ENCODE measurements at regions of chr2 and their contacts with region 1.

Region 1: GRCh38 chr2:160730296-160730995 is 236.8 kb upstream of the RBMS1 start:
- DNase-seq: peak; percentile 75
- H3K4me3 ChIP-seq: no peak overlapping the region
- H3K4me3 Mint-ChIP-seq: peak overlapping the region; percentile 46
- H3K27ac Mint-ChIP-seq: peak overlapping the region; percentile 71
- H3K4me1 ChIP-seq: peaks cover 32% of the 10 kb centered on the region
- H3K4me1 Mint-ChIP-seq: peaks cover 40% of the 10 kb centered on the region
- H3K27me3 ChIP-seq: no peaks in the 10 kb centered on the region
- H3K27me3 Mint-ChIP-seq: no peaks in the 10 kb centered on the region
- CTCF ChIP-seq: no peak

Region 2: GRCh38 chr2:160472839-160473251 is 257.6 kb before region 1 on chr2:
- CTCF ChIA-PET with region 1: no interaction called
- POLR2A ChIA-PET with region 1: no interaction called
- intact Hi-C with region 1: no loop called
- DNase-seq: no peak
- H3K4me3 ChIP-seq: no peak overlapping the region
- H3K4me3 Mint-ChIP-seq: no peak overlapping the region
- H3K27ac Mint-ChIP-seq: peak overlapping the region; percentile 9
- H3K4me1 ChIP-seq: peaks cover 13% of the 10 kb centered on the region
- H3K4me1 Mint-ChIP-seq: peaks cover 13% of the 10 kb centered on the region
- H3K27me3 ChIP-seq: no peaks in the 10 kb centered on the region
- H3K27me3 Mint-ChIP-seq: no peaks in the 10 kb centered on the region
- CTCF ChIP-seq: no peak

Region 3: DNA sequence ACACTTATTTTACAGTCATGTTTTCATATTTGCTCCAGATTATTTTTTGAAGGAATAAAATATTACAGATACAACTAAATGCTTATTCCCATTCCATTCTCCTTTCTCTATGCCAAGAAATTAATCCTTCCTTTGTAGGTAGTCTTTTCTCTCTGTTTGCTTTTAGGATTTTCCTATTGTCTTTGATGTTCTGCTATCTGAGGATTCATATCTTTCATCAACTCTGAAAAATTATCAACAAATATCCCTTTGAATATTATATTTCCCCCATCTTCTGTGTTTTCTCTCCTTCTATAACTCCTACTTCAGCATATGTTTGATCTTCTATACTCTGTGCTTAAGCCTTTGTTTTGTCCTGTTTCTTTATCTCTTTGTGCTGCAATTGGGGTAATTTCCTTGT is 23.5 kb after region 1 on chr2:
- CTCF ChIA-PET with region 1: interaction called, 3 read pairs
- POLR2A ChIA-PET with region 1: no interaction called
- intact Hi-C with region 1: loop called (anchors 1 kb)
- DNase-seq: no peak
- H3K4me3 ChIP-seq: no peak overlapping the region
- H3K4me3 Mint-ChIP-seq: no peak overlapping the region
- H3K27ac Mint-ChIP-seq: no peak overlapping the region
- H3K4me1 ChIP-seq: peaks cover 23% of the 10 kb centered on the region
- H3K4me1 Mint-ChIP-seq: peaks cover 21% of the 10 kb centered on the region
- H3K27me3 ChIP-seq: no peaks in the 10 kb centered on the region
- H3K27me3 Mint-ChIP-seq: no peaks in the 10 kb centered on the region
- CTCF ChIP-seq: no peak

Region 4: GRCh38 chr2:160932968-160933367 is 202.5 kb after region 1 on chr2:
- CTCF ChIA-PET with region 1: no interaction called
- POLR2A ChIA-PET with region 1: no interaction called
- intact Hi-C with region 1: loop called (anchors 2 kb)
- DNase-seq: peak in 1 of 2 experiments; percentile 42
- H3K4me3 ChIP-seq: no peak overlapping the region
- H3K4me3 Mint-ChIP-seq: no peak overlapping the region
- H3K27ac Mint-ChIP-seq: no peak overlapping the region
- H3K4me1 ChIP-seq: 0 out of 2 replicates have a peak, but pooled peaks cover 9% of the 10 kb centered on the region
- H3K4me1 Mint-ChIP-seq: peaks cover 7% of the 10 kb centered on the region
- H3K27me3 ChIP-seq: no peaks in the 10 kb centered on the region
- H3K27me3 Mint-ChIP-seq: no peaks in the 10 kb centered on the region
- CTCF ChIP-seq: no peak

Region 5: DNA sequence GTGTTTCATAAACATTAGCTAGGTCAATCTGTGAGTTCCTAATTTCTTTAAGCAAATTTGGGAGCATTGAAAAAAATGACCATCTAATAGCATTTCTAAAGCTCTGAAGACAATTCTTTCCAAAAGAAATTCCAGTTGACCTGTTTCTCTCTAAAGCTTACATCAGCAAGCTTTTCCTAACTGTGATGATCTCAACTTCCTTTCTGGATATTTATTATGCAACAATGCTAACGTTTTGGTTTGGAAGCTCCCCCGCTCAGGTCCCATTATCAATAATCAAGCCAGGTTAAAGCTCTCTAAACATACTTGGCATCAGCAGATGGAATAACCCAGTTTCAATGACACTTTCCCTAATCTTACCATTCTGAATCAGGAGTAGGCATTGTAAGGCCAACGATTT is 233.5 kb after region 1 on chr2:
- CTCF ChIA-PET with region 1: no interaction called
- POLR2A ChIA-PET with region 1: no interaction called
- intact Hi-C with region 1: no loop called
- DNase-seq: no peak
- H3K4me3 ChIP-seq: no peak overlapping the region
- H3K4me3 Mint-ChIP-seq: no peak overlapping the region
- H3K27ac Mint-ChIP-seq: no peak overlapping the region
- H3K4me1 ChIP-seq: no peaks in the 10 kb centered on the region
- H3K4me1 Mint-ChIP-seq: peaks cover 6% of the 10 kb centered on the region
- H3K27me3 ChIP-seq: no peaks in the 10 kb centered on the region
- H3K27me3 Mint-ChIP-seq: no peaks in the 10 kb centered on the region
- CTCF ChIP-seq: no peak

Measured in Caco-2 (cell line).